ENCODE measurements at regions of chr14 and their contacts with region 1.

Region 1: GRCh38 chr14:65412032-65412846 is at the start of gene FUT8:
- DNase-seq: peak; percentile 93
- H3K4me3 ChIP-seq: peak within 1 kb of the TSS; percentile 79
- H3K27ac ChIP-seq: peak within 1 kb of the TSS; percentile 95
- H3K27me3 ChIP-seq: no peaks in the 10 kb centered on the region
- CTCF ChIP-seq: peak; percentile 61
- polyA plus RNA-seq, gene FUT8: 42.0 and 45.1 TPM in 2 replicates

Region 2: GRCh38 chr14:65164068-65164824 is 248.0 kb before region 1 on chr14:
- CTCF ChIA-PET with region 1: interaction called, 95 read pairs
- POLR2A ChIA-PET with region 1: interaction called, 20 read pairs
- DNase-seq: no peak
- H3K4me3 ChIP-seq: no peak overlapping the region
- H3K27ac ChIP-seq: no peak overlapping the region
- H3K27me3 ChIP-seq: no peaks in the 10 kb centered on the region
- CTCF ChIP-seq: peak; percentile 71

Region 3: GRCh38 chr14:65222440-65222858 is 189.8 kb before region 1 on chr14:
- CTCF ChIA-PET with region 1: interaction called, 26 read pairs
- POLR2A ChIA-PET with region 1: interaction called, 10 read pairs
- DNase-seq: no peak
- H3K4me3 ChIP-seq: no peak overlapping the region
- H3K27ac ChIP-seq: no peak overlapping the region
- H3K27me3 ChIP-seq: no peaks in the 10 kb centered on the region
- CTCF ChIP-seq: peak; percentile 86

Region 4: GRCh38 chr14:65346947-65347346 is 65.3 kb before region 1 on chr14:
- CTCF ChIA-PET with region 1: interaction called, 11 read pairs
- POLR2A ChIA-PET with region 1: interaction called, 9 read pairs
- DNase-seq: no peak
- H3K4me3 ChIP-seq: no peak overlapping the region
- H3K27ac ChIP-seq: no peak overlapping the region
- H3K27me3 ChIP-seq: no peaks in the 10 kb centered on the region
- CTCF ChIP-seq: no peak

Region 5: GRCh38 chr14:65686761-65687160 is 274.5 kb after region 1 on chr14:
- CTCF ChIA-PET with region 1: no interaction called
- POLR2A ChIA-PET with region 1: no interaction called
- DNase-seq: no peak
- H3K4me3 ChIP-seq: no peak overlapping the region
- H3K27ac ChIP-seq: no peak overlapping the region
- H3K27me3 ChIP-seq: no peaks in the 10 kb centered on the region
- CTCF ChIP-seq: no peak

Region 6: GRCh38 chr14:65832431-65833266 is 420.4 kb after region 1 on chr14:
- CTCF ChIA-PET with region 1: interaction called, 359 read pairs
- POLR2A ChIA-PET with region 1: no interaction called
- DNase-seq: no peak
- H3K4me3 ChIP-seq: no peak overlapping the region
- H3K27ac ChIP-seq: no peak overlapping the region
- H3K27me3 ChIP-seq: peaks cover 14% of the 10 kb centered on the region
- CTCF ChIP-seq: peak; percentile 46

Region 7: DNA sequence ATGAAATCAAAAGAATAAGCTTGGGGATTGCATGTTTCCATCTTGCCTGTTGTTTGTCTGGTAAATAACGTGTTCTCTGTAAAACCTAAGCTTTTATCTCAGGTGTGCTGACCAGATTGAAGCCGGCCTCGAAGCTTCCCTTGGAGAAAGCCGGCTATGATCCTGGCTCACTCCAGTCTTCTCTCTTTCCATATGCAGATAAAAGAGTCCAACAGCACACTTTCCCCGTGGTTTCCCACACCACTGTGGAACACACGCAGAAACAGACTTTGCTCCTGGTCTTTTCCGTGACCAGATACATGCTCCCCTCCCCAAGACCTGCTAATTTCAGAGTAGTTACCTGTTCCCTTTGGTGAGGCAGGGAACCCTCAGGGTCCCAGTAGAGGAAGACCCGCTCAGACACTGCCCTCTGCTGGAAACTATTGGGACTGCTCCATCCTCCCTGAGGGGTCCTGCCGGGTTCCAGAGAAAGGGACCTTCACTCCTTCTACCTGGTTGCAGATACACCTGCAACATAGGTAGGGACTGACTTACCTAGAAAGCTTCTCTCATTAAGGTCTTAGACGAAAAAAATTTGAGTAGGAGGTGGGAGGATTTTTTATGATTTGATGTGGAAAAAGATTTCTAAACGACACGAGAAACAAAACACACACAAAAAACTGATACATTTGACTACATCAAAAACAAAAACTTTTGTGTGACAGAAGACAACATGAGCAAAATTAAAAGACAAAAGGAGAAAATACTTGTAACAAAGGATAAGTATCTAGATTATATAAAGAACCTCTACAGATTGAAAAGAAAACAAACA is 658.5 kb after region 1 on chr14:
- CTCF ChIA-PET with region 1: interaction called, 12 read pairs
- POLR2A ChIA-PET with region 1: no interaction called
- DNase-seq: no peak
- H3K4me3 ChIP-seq: no peak overlapping the region
- H3K27ac ChIP-seq: no peak overlapping the region
- H3K27me3 ChIP-seq: no peaks in the 10 kb centered on the region
- CTCF ChIP-seq: peak; percentile 81

Region 8: GRCh38 chr14:66105815-66106214 is 693.6 kb after region 1 on chr14:
- CTCF ChIA-PET with region 1: no interaction called
- POLR2A ChIA-PET with region 1: no interaction called
- DNase-seq: no peak
- H3K4me3 ChIP-seq: no peak overlapping the region
- H3K27ac ChIP-seq: no peak overlapping the region
- H3K27me3 ChIP-seq: no peaks in the 10 kb centered on the region
- CTCF ChIP-seq: no peak

Measured in AG04450 (cell line).